ENCODE measurements at regions of chr2 and their contacts with region 1.

Region 1: GRCh38 chr2:119759451-119760236 is at the start of gene PTPN4:
- DNase-seq: peak; percentile 78 to 99 (median 92)

Region 2: GRCh38 chr2:119574108-119574815 is 185.4 kb before region 1 on chr2:
- intact Hi-C with region 1: no loop called
- DNase-seq: no peak

Region 3: DNA sequence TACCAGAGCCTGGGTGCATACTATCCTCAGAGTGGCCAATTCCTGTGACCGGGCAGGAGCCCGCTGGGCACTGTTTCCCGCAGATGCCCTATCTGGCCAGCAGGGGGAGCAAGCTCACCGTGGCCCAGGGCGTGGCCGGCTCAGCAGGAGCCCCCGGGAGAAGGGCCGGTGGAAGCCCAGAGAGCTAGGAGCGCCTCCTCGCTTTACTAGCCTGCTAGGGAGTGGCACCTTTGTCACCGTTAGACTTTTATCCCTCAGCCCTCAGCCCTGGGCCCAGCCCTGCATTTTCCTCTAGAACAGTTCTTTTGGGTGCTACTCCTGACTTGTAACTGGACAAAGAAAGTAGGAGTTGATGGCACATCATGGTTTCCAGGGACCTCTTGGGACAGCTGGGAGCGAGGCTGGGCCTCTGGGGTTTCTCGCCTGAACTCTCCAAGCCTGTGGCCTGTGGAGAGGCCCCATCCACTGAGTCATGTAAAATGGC is 56.7 kb before region 1 on chr2:
- intact Hi-C with region 1: loop called (anchors 10 kb)
- DNase-seq: peak; percentile 45 to 96 (median 72)

Region 4: DNA sequence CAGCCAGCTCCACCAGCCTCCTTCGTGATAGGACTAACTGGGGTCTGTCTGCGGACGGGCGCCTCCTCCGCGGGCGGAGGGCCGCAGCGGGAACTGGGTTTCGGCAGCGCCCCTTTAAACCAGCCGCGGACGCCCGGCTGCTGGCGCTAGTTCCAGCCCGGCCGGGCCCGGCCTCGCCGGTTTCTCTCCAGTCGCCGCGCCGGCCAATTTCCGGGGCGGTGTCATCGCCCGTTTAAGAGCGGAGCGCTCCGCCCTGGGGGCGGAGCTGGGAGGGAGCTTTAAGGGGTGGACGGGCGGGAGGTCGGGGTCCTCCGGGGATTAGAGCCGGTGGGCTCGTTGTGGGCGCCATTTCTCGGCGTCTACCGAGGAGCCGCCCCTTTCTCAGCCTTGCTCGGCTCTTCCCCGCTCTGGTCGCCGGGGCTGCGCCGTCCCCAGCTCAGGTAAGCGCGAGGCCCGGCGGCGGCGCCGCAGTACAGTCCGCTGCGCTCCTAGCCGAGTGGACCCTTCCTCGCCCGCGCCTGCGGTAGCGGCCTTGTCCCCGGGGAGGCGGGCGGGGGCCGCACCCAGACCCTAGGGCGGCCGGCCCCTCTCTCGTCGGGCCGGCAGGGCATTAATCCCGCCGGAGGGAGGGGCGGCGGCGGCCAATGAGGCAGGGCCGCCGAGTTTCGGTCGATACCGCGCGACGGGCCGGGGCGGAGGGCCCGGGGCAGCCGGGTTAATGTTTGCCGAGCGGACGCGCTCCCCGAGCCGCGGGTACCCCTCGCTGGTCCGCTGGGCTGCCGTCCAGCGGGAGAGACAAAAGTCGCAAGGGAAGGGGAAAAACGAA is 253.3 kb after region 1 on chr2 and contains the start of gene EPB41L5:
- intact Hi-C with region 1: loop called (anchors 2 kb)
- DNase-seq: peak; percentile 76 to 98 (median 90)

Measured in posterior cingulate gyrus (tissue), 11 donors.